ENCODE measurements at regions of chr2 and their contacts with region 1.

Region 1: GRCh38 chr2:30447149-30448045 is at the start of gene LCLAT1:
- DNase-seq: peak; percentile 86
- H3K4me3 Mint-ChIP-seq: peak within 1 kb of the TSS; percentile 90
- H3K27ac Mint-ChIP-seq: peak within 1 kb of the TSS; percentile 95
- H3K4me1 Mint-ChIP-seq: peaks cover 40% of the 10 kb centered on the region
- H3K27me3 Mint-ChIP-seq: no peaks in the 10 kb centered on the region
- total RNA-seq, gene LCLAT1: 18.8 to 22.8 TPM

Region 2: GRCh38 chr2:30060562-30060961 is 386.8 kb before region 1 on chr2:
- CTCF ChIA-PET with region 1: no interaction called
- intact Hi-C with region 1: no loop called
- DNase-seq: no peak
- H3K4me3 Mint-ChIP-seq: no peak overlapping the region
- H3K27ac Mint-ChIP-seq: no peak overlapping the region
- H3K4me1 Mint-ChIP-seq: no peaks in the 10 kb centered on the region
- H3K27me3 Mint-ChIP-seq: peaks cover 18% of the 10 kb centered on the region

Region 3: GRCh38 chr2:30225131-30225762 is 222.2 kb before region 1 on chr2:
- CTCF ChIA-PET with region 1: no interaction called
- intact Hi-C with region 1: loop called (anchors 1 kb)
- DNase-seq: peak; percentile 60
- H3K4me3 Mint-ChIP-seq: peak overlapping the region; percentile 81
- H3K27ac Mint-ChIP-seq: peak overlapping the region; percentile 87
- H3K4me1 Mint-ChIP-seq: peaks cover 64% of the 10 kb centered on the region
- H3K27me3 Mint-ChIP-seq: peaks cover 3% of the 10 kb centered on the region

Region 4: DNA sequence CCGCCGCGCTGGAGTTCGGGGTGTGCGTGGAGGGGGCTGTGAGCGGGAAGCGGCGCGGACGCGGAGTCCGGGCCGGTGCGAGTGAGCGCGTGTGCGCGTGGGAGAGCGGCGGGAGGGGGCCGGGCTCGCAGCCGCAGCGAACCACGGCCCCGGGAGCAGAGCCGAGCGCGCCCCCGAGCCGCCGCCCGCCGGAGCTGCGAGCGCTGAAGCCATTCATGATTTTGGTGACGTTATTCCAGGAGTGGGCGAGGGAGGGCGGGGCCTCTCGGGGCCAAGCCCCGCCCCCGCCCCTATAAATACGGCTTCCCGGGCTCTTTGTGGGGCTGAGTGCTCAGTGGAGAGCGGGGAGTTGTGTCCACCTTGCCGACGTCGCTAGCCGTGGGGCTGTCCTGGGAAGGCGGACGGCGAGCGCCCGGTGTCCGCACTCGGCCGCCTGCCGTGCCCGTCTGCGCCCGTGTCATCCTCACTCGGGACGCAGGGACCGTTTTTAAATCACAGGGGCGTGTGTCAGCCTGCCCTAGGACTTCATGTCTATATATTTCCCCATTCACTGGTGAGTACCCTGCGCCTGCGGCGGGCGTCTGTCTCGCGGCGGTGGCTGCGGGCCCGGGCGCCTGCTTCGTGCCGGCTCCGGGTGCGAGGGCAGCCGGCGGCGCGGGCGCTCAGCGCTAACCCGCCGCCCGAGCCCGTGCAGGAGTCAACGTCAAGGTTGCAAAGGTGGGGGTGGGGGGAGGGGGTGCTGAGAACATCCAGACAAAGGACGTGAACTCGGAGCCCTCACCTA is 216.0 kb before region 1 on chr2 and contains the start of gene LBH:
- CTCF ChIA-PET with region 1: no interaction called
- intact Hi-C with region 1: loop called (anchors 1 kb)
- DNase-seq: peak; percentile 90
- H3K4me3 Mint-ChIP-seq: peak within 1 kb of the TSS; percentile 83
- H3K27ac Mint-ChIP-seq: peak within 1 kb of the TSS; percentile 74
- H3K4me1 Mint-ChIP-seq: peaks cover 56% of the 10 kb centered on the region
- H3K27me3 Mint-ChIP-seq: peaks cover 3% of the 10 kb centered on the region
- total RNA-seq, gene LBH: 71.4 to 75.3 TPM

Region 5: DNA sequence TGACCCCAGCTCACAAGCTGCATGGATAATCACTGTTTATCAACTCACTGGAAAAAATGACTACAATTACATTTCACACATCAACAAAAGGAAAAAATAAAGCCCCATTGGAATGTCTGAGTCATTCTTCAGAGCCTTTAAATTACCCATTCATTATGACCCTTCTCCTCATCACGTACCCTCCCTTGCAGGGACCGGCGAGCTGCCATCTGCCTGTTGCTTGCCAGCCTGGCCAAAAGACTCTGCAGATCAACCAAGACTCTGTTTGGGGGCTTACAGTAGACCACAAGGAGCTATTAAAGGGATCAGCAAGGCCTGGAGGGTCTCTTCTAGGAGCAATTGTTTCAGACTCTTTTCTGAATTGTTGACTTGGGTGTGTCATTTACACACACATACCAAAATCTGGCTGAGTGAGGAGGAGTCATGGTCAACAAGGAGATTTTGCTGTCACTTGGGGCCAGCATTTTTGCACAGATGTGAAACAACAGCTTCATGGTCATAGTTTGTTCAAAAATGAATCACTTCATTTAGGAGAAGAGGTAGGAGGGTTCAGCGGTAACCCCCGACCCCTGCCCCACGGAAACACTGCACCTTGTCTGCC is 174.0 kb before region 1 on chr2:
- CTCF ChIA-PET with region 1: no interaction called
- intact Hi-C with region 1: loop called (anchors 1 kb)
- DNase-seq: peak; percentile 60
- H3K4me3 Mint-ChIP-seq: no peak overlapping the region
- H3K27ac Mint-ChIP-seq: peak overlapping the region; percentile 68
- H3K4me1 Mint-ChIP-seq: peaks cover 78% of the 10 kb centered on the region
- H3K27me3 Mint-ChIP-seq: no peaks in the 10 kb centered on the region

Region 6: DNA sequence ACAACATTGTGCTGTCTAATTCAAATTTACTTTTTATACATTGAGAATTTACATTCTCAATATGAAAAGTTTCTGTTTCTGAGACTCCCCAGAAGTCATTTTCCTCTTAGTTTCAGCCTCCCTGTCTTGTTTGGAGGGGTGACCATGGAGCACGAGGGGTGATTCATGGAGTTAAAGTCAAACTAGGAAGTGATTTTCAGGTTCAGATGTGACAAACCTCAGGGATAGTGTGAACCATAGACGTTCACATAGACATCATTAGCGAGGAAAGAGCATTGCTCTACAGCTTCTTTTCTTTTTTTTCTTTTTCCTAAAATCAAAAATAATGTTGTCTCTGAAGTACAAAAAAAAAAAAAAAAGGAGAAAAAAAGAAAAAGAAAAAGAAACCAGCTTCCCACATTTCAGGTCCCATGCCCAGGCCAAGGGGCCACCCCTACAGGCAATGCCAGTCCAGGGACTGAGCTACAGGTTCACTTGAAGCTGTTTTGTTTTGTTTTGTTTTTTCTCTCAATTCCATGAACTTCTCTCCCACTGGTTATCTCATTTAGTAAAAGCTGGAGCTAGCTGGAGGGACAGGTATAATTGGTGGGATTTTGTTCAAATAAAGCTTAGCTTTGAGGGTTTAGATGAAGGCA is 18.5 kb before region 1 on chr2:
- CTCF ChIA-PET with region 1: interaction called, 4 read pairs
- intact Hi-C with region 1: loop called (anchors 1 kb)
- DNase-seq: peak; percentile 54
- H3K4me3 Mint-ChIP-seq: peak overlapping the region; percentile 36
- H3K27ac Mint-ChIP-seq: peak overlapping the region; percentile 82
- H3K4me1 Mint-ChIP-seq: peaks cover 48% of the 10 kb centered on the region
- H3K27me3 Mint-ChIP-seq: no peaks in the 10 kb centered on the region

Region 7: GRCh38 chr2:30475542-30475941 is 28.1 kb after region 1 on chr2:
- CTCF ChIA-PET with region 1: no interaction called
- intact Hi-C with region 1: loop called (anchors 1 kb)
- DNase-seq: no peak
- H3K4me3 Mint-ChIP-seq: no peak overlapping the region
- H3K27ac Mint-ChIP-seq: no peak overlapping the region
- H3K4me1 Mint-ChIP-seq: peaks cover 33% of the 10 kb centered on the region
- H3K27me3 Mint-ChIP-seq: no peaks in the 10 kb centered on the region

Region 8: DNA sequence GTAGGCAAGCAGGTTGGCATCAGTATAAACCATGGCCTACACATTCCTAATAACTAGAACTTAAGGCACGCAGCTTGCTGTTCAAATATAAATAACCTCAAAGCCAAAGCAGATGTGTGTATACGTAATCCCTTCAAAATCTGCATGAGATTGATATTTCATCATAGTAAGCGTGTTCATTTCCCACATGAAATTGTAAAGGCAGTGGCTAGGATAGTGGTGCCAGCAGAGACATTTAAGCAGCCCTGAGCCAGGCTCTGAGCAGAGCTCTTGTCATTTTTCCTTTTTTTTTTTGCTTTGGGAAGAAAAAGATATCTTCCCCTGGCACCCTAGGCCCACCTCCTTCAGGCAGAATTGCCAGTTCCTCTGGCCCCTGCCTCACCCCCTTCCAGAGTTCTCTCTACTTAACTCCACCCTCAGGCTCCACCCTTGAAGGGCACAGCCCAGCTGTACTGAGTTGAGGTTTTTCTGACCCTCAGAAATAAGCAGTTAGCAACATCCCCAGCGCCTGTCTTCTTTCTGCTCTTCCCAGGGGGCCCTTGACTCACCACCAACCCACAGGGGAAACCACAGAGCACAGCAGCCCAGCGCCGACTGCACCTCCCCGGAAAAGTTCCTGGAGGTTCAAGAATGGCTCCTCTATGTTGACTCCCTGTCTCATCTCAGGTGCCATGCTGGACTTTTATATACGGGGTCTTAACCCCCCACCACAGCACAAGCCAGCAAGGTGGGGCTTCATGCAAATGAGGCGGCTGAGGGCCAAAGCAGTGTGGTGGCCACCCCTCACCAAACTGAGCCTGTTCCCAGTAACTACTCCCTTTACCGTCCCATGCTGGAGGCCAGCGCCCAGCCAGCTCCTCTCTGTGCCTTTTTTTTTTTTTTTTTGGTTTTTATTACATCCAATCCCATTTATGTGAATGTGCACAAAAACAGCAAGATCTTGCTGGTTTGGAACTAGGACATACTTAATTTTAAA is 871.3 kb after region 1 on chr2:
- CTCF ChIA-PET with region 1: no interaction called
- intact Hi-C with region 1: loop called (anchors 10 kb)
- DNase-seq: peak; percentile 61
- H3K4me3 Mint-ChIP-seq: no peak overlapping the region
- H3K27ac Mint-ChIP-seq: no peak overlapping the region
- H3K4me1 Mint-ChIP-seq: peaks cover 39% of the 10 kb centered on the region
- H3K27me3 Mint-ChIP-seq: no peaks in the 10 kb centered on the region

Measured in activated naive CD4-positive, alpha-beta T cell treated with anti-CD3 and anti-CD28 coated beads for 36 hours (primary cell).